ENCODE measurements at regions of chr1 and their contacts with region 1.

Region 1: DNA sequence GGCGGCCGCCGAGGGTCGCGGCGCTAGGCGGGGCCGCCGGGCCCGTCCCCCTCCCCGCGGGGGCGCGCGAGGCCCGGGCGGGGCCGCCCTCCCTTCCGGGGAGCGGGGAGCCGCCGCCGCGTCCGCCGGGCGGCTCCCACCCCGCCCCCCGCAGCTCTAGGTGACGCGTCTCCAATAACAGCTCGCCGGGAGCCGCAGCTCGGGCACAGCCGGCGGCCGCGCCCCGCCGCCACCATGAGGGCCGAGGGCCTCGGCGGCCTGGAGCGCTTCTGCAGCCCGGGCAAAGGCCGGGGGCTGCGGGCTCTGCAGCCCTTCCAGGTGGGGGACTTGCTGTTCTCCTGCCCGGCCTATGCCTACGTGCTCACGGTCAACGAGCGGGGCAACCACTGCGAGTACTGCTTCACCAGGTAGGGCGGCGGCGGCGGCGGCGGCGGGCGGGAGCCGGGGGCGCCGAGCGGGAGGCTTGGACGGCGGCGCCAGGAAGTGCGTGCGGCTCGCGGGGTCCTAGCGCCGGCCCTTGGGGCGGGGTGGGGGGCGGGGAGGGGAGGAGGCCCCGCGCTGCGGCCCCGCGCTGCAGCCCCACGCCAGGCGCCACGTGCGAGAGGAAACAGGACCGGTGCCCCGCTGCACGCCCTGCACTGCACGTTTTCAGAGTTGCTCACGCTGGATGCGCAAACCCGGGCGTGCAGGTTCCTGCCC is at the start of gene SMYD2:
- DNase-seq: peak; percentile 73 to 77
- ATAC-seq: peak; percentile 43 to 83 (median 73)
- H3K4me3 ChIP-seq: peak within 1 kb of the TSS; percentile 67 to 96 (median 80)
- H3K27ac ChIP-seq: peak within 1 kb of the TSS; percentile 95 to 100 (median 98)
- H3K4me1 ChIP-seq: peaks cover 4 to 73% (median 33%) of the 10 kb centered on the region in 9 donors
- H3K27me3 ChIP-seq: no peaks in the 10 kb centered on the region
- CTCF ChIP-seq: no peak
- total RNA-seq, gene SMYD2: 158 to 438 (median 356) TPM

Region 2: DNA sequence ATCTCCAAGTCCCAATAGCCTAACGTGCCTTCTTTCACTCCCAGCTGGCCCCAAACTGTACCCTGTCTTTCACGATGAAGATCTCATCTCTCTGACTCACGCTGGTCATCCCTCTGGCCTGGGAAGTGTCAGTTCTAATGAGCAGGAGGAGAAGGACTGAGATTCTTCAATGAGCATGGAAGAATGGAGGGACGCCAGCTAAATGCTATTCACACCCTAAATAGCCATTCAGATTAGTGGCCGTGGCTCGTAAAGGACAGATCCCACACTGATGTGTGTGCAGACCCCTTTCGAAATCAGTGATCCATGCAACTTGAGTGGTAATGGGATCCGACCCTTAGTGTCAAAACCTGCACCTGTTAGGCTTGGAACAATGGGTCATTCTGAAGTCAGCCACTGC is 76.1 kb before region 1 on chr1:
- intact Hi-C with region 1: no loop called
- DNase-seq: no peak
- ATAC-seq: no peak
- H3K4me3 ChIP-seq: no peak overlapping the region
- H3K27ac ChIP-seq: no peak overlapping the region
- H3K4me1 ChIP-seq: no peaks in the 10 kb centered on the region
- H3K27me3 ChIP-seq: peaks cover 0 to 9% (median 0%) of the 10 kb centered on the region in 7 donors
- CTCF ChIP-seq: no peak

Region 3: DNA sequence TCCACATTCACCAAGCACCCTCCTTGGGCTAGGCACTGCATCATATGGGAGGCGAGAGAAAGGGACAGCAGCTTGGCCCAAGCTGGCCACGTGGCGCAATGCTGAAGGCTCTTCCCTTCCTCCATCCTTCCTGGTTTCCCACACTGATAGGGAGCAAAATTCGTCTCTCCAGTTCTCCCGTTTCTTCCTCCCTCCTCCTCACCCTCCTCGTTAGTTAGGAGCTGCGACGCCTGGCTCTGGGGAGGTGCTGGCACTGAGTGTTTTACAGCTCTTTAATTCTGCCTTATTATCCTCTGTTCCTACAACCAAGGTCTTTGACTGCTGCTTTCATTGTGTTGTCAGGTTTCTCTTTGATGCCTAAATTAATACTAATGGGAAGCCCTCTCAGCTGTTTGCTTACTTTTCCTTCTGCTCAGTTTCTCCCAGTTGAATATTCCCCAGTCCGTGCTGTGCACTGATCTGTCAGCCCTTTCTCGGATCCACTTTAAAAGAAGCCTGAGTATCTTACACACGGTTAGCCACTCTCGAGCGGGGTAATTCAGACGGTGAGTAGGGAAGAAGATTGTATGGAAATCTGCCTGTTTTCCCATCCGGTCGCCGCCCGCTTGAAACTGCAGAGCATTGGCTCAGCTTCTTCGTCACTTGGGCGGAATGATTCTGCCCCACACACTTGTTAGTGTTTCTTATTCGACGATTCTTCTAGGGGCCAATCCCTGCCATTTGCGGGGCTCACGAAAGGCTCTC is 56.4 kb before region 1 on chr1:
- intact Hi-C with region 1: loop called in 1 of 10 experiments (anchors 5 kb)
- DNase-seq: peak; percentile 11 to 17
- ATAC-seq: peak in 5 of 8 donors; percentile 4 to 59 (median 31)
- H3K4me3 ChIP-seq: peak overlapping the region in 8 of 10 donors; percentile 12 to 41 (median 35)
- H3K27ac ChIP-seq: peak overlapping the region in 6 of 10 donors; percentile 11 to 68 (median 46)
- H3K4me1 ChIP-seq: peaks cover 0 to 24% (median 14%) of the 10 kb centered on the region in 9 donors
- H3K27me3 ChIP-seq: peaks cover 0 to 12% (median 3%) of the 10 kb centered on the region in 7 donors
- CTCF ChIP-seq: no peak

Region 4: GRCh38 chr1:214310010-214310409 is 28.8 kb after region 1 on chr1:
- intact Hi-C with region 1: loop called in 3 of 10 experiments (anchors 5 kb)
- DNase-seq: no peak
- ATAC-seq: no peak
- H3K4me3 ChIP-seq: peak overlapping the region in 1 of 10 donors; percentile 12
- H3K27ac ChIP-seq: peak overlapping the region in 2 of 10 donors; percentile 5 to 10
- H3K4me1 ChIP-seq: peaks cover 0 to 75% (median 32%) of the 10 kb centered on the region in 9 donors
- H3K27me3 ChIP-seq: no peaks in the 10 kb centered on the region
- CTCF ChIP-seq: no peak

Region 5: DNA sequence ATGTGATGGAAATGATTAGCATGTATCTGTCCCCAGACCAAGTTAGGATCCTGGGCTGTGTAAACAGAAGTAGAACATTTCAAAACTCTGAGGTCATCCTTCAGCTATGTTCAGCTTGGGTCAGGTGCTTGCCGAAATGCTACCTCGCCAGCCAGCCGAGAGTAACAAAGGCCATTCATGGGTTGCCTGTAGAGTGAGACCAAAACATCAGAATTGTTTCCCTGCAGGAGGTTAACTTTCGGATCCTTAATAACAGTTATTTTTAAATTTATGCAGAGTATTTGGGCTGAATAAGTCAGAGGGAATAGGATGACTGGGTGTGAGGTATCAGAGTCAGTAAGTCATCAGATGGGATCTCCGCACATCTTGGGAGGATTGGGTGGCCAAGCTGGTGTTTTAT is 35.4 kb after region 1 on chr1:
- intact Hi-C with region 1: loop called in 4 of 10 experiments (anchors 1 to 5 kb)
- DNase-seq: peak in 1 of 2 donors; percentile 50
- ATAC-seq: peak; percentile 52 to 88 (median 72)
- H3K4me3 ChIP-seq: no peak overlapping the region
- H3K27ac ChIP-seq: peak overlapping the region in 9 of 10 donors; percentile 4 to 86 (median 66)
- H3K4me1 ChIP-seq: peaks cover 0 to 71% (median 34%) of the 10 kb centered on the region in 9 donors
- H3K27me3 ChIP-seq: no peaks in the 10 kb centered on the region
- CTCF ChIP-seq: no peak

Region 6: GRCh38 chr1:214328770-214329469 is 47.8 kb after region 1 on chr1:
- intact Hi-C with region 1: loop called in 2 of 10 experiments (anchors 5 kb)
- DNase-seq: peak; percentile 74 to 83
- ATAC-seq: peak; percentile 83 to 91 (median 88)
- H3K4me3 ChIP-seq: no peak overlapping the region
- H3K27ac ChIP-seq: peak overlapping the region in 6 of 10 donors; percentile 31 to 86 (median 76)
- H3K4me1 ChIP-seq: peaks cover 6 to 62% (median 27%) of the 10 kb centered on the region in 9 donors
- H3K27me3 ChIP-seq: no peaks in the 10 kb centered on the region
- CTCF ChIP-seq: peak; percentile 83 to 96 (median 92)

Measured in heart right ventricle (tissue), 16 donors.